ENCODE measurements at regions of chr6 and their contacts with region 1.

Region 1: DNA sequence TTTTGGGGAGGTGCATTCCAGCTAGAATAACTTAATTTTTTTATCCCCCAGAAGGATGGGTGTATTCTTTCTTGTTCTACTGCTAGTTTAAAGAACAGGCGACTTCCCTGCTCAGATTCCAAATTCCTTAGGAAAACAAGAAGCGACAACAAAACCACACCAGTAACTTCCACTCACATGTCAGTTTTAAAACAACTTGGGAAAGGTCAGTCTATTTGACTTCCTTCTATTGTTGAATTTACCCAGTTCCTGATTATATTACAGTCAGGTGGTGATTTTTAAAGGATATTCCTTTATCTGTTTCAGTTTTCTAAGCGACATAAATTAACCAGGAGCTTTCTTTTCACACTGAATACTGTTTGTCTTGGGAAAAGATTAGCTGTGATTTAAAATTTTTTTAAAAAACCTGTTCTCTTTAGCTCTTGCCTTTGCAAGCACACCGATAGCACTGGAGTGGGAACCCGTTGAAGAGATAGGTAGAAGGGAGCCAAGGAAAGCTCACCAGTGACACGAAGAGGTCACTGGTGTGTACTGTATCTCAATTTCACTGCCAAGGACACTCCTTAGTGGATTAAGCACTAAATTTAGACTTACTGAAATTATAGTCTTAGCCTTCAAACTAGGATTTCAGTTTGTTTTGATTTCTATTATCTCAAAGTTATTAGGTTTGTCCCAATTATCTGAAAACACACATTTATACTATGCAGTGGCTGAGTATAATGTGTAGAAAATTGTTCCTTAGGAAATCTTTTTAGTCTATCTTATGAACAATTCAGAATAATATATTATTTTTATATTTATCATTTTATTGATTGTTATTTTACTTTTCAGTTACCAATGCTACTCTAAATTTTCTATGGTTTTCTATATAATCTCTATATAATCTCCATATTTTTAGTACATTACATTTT is 22.3 kb downstream of the MARCKS start:
- DNase-seq: peak; percentile 54
- H3K4me3 Mint-ChIP-seq: no peak overlapping the region
- H3K27ac Mint-ChIP-seq: no peak overlapping the region
- H3K4me1 Mint-ChIP-seq: peaks cover 16% of the 10 kb centered on the region
- H3K27me3 Mint-ChIP-seq: no peaks in the 10 kb centered on the region
- CTCF ChIP-seq: peak; percentile 55

Region 2: DNA sequence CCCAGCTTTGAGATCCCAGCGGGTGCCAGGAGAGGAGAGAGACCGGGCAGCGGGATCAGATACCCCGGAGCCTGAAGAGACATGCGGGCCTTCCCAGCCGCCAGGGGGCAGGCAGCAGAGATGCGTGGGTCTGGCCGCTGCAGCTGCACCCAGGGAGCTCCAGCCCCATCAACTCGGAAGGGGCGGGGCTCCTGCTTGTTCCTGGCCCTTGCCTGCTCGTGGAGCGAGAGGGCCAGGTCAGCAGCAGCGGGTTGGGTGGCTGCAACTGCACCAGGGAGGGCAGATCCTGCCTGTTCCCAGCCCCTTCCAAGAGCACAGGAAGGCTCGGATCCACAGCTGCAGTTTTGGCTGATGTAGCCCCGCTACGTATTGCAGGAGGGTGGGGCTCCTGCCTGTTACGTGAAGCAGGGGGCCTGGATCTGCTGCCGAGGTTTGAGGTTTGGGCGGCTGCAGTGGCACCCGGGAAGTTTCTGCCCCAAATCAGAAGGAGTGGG is 999.5 kb before region 1 on chr6:
- CTCF ChIA-PET with region 1: interaction called, 8 read pairs
- intact Hi-C with region 1: loop called (anchors 5 kb)
- DNase-seq: peak; percentile 78
- H3K4me3 Mint-ChIP-seq: peak overlapping the region; percentile 60
- H3K27ac Mint-ChIP-seq: no peak overlapping the region
- H3K4me1 Mint-ChIP-seq: no peaks in the 10 kb centered on the region
- H3K27me3 Mint-ChIP-seq: no peaks in the 10 kb centered on the region
- CTCF ChIP-seq: peak; percentile 23

Region 3: GRCh38 chr6:113980937-113981554 is 101.6 kb after region 1 on chr6:
- CTCF ChIA-PET with region 1: no interaction called
- intact Hi-C with region 1: no loop called
- DNase-seq: peak; percentile 20
- H3K4me3 Mint-ChIP-seq: no peak overlapping the region
- H3K27ac Mint-ChIP-seq: no peak overlapping the region
- H3K4me1 Mint-ChIP-seq: no peaks in the 10 kb centered on the region
- H3K27me3 Mint-ChIP-seq: no peaks in the 10 kb centered on the region
- CTCF ChIP-seq: peak; percentile 69